ENCODE measurements at regions of chrX and their contacts with region 1.

Region 1: DNA sequence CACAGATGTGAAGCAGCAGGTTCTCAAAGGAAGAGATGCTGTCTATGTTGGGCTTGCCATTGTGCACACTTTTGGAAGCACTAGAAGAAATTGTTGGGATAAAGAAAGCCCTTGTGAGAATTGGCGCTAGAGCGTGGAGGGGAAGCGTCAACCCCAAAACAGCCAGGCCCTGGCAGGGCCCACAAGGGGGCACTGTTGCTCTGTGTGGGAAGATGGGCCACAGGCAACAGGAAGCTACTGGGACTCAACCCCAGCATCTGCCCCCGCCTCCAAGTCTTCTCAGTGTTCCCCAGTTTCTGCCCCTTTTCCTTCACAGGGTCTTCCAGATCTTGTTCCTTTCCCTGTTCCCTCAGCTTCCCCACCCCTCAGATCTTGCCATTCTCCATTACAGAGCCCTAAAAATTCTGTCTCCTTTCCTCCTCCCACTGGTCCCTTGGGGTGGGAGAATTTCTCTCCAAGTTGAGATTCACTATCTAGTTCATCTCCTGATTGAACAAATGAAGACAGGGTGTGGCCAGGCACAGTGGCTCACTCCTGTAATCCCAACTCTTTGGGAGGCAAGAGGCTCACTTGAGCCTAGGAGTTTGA is 85.5 kb downstream of the STARD8 start:
- DNase-seq: no peak
- ATAC-seq: peak; percentile 96
- H3K4me3 ChIP-seq: no peak overlapping the region
- H3K27ac ChIP-seq: no peak overlapping the region
- H3K4me1 ChIP-seq: no peaks in the 10 kb centered on the region
- H3K27me3 ChIP-seq: no peaks in the 10 kb centered on the region
- CTCF ChIP-seq: peak; percentile 75 to 84 (median 81)
- EP300 ChIP-seq: no peak
- POLR2A ChIP-seq: no peak
- RAD21 ChIP-seq: peak; percentile 75

Region 2: GRCh38 chrX:68571610-68572311 is 161.2 kb before region 1 on chrX:
- CTCF ChIA-PET with region 1: no interaction called
- POLR2A ChIA-PET with region 1: no interaction called
- RAD21 ChIA-PET with region 1: no interaction called
- SMC1A ChIA-PET with region 1: no interaction called
- in situ Hi-C with region 1: no loop called
- intact Hi-C with region 1: no loop called
- DNase-seq: peak; percentile 39
- ATAC-seq: peak; percentile 89
- H3K4me3 ChIP-seq: no peak overlapping the region
- H3K27ac ChIP-seq: no peak overlapping the region; the same call in 1 of the 2 replicates
- H3K4me1 ChIP-seq: no peaks in the 10 kb centered on the region
- H3K27me3 ChIP-seq: no peaks in the 10 kb centered on the region
- CTCF ChIP-seq: no peak
- EP300 ChIP-seq: no peak
- POLR2A ChIP-seq: no peak
- RAD21 ChIP-seq: no peak

Region 3: GRCh38 chrX:68743754-68744153 is 10.8 kb after region 1 on chrX:
- CTCF ChIA-PET with region 1: interaction called, 15 read pairs
- POLR2A ChIA-PET with region 1: no interaction called
- RAD21 ChIA-PET with region 1: no interaction called
- SMC1A ChIA-PET with region 1: no interaction called
- in situ Hi-C with region 1: no loop called
- intact Hi-C with region 1: no loop called
- DNase-seq: no peak
- ATAC-seq: no peak
- H3K4me3 ChIP-seq: no peak overlapping the region
- H3K27ac ChIP-seq: no peak overlapping the region
- H3K4me1 ChIP-seq: no peaks in the 10 kb centered on the region
- H3K27me3 ChIP-seq: no peaks in the 10 kb centered on the region
- CTCF ChIP-seq: no peak
- EP300 ChIP-seq: no peak
- POLR2A ChIP-seq: no peak
- RAD21 ChIP-seq: no peak

Region 4: DNA sequence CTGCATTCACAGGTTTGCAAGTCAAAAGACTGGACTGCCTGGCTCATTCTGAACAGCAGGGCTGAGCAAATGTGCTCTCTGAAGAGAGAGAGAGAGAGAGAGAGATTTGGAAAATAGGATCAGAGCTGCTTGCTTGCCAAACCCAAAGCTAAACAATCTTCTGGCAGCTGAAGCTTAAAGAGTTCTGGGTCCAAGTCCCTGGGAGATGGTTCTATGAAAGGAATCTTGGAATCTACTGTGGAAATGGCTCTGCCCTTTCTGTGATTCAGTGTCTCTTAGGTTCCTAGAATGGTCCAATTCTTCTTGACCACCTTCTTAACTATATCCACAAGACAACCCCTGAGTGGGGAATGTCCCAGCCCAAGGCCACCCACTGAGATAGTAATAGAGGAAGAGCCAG is 29.8 kb after region 1 on chrX:
- CTCF ChIA-PET with region 1: no interaction called
- POLR2A ChIA-PET with region 1: no interaction called
- RAD21 ChIA-PET with region 1: no interaction called
- SMC1A ChIA-PET with region 1: no interaction called
- in situ Hi-C with region 1: no loop called
- intact Hi-C with region 1: no loop called
- DNase-seq: no peak
- ATAC-seq: no peak
- H3K4me3 ChIP-seq: no peak overlapping the region
- H3K27ac ChIP-seq: no peak overlapping the region
- H3K4me1 ChIP-seq: no peaks in the 10 kb centered on the region
- H3K27me3 ChIP-seq: no peaks in the 10 kb centered on the region; a peak in 1 of 4 replicates
- CTCF ChIP-seq: no peak
- EP300 ChIP-seq: no peak
- POLR2A ChIP-seq: no peak
- RAD21 ChIP-seq: no peak

Region 5: DNA sequence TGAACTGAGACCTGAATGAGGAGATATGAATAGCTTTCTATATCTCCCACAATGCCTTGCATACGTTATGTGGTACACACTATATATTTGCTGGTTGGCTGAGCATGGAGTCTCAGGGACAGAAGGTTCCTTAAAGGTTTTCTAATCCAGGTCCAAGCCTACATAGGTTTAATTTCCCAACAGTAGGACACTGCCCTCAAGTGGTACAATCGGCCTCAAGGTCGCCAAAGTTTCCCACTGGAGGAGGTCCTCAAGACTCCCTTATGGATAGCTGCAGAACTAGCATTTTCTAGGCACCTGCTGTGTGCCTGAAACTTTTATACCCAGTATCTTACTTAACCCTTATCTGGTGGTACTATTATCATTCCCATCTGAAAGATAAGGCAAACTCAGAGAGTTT is 74.8 kb after region 1 on chrX:
- CTCF ChIA-PET with region 1: interaction called, 40 read pairs
- POLR2A ChIA-PET with region 1: no interaction called
- RAD21 ChIA-PET with region 1: interaction called, 8 read pairs
- SMC1A ChIA-PET with region 1: interaction called, 30 read pairs
- in situ Hi-C with region 1: no loop called
- intact Hi-C with region 1: loop called (anchors 1 kb)
- DNase-seq: no peak
- ATAC-seq: 0 out of 3 replicates have a peak, but pooled peaks have one; percentile 28
- H3K4me3 ChIP-seq: no peak overlapping the region
- H3K27ac ChIP-seq: no peak overlapping the region
- H3K4me1 ChIP-seq: no peaks in the 10 kb centered on the region
- H3K27me3 ChIP-seq: no peaks in the 10 kb centered on the region; a peak in 1 of 4 replicates
- CTCF ChIP-seq: peak; percentile 1 to 32 (median 28); a peak in 3 of 6 replicates
- EP300 ChIP-seq: no peak
- POLR2A ChIP-seq: no peak
- RAD21 ChIP-seq: 0 out of 2 replicates have a peak, but pooled peaks have one; percentile 28

Region 6: GRCh38 chrX:69222103-69223090 is 489.4 kb after region 1 on chrX:
- CTCF ChIA-PET with region 1: no interaction called
- POLR2A ChIA-PET with region 1: no interaction called
- RAD21 ChIA-PET with region 1: no interaction called
- SMC1A ChIA-PET with region 1: no interaction called
- in situ Hi-C with region 1: no loop called
- intact Hi-C with region 1: loop called (anchors 2 kb)
- DNase-seq: no peak
- ATAC-seq: peak; percentile 95
- H3K4me3 ChIP-seq: no peak overlapping the region
- H3K27ac ChIP-seq: no peak overlapping the region
- H3K4me1 ChIP-seq: no peaks in the 10 kb centered on the region
- H3K27me3 ChIP-seq: no peaks in the 10 kb centered on the region; a peak in 2 of 4 replicates
- CTCF ChIP-seq: peak; percentile 64 to 73 (median 71)
- EP300 ChIP-seq: no peak
- POLR2A ChIP-seq: no peak
- RAD21 ChIP-seq: peak; percentile 83

Region 7: DNA sequence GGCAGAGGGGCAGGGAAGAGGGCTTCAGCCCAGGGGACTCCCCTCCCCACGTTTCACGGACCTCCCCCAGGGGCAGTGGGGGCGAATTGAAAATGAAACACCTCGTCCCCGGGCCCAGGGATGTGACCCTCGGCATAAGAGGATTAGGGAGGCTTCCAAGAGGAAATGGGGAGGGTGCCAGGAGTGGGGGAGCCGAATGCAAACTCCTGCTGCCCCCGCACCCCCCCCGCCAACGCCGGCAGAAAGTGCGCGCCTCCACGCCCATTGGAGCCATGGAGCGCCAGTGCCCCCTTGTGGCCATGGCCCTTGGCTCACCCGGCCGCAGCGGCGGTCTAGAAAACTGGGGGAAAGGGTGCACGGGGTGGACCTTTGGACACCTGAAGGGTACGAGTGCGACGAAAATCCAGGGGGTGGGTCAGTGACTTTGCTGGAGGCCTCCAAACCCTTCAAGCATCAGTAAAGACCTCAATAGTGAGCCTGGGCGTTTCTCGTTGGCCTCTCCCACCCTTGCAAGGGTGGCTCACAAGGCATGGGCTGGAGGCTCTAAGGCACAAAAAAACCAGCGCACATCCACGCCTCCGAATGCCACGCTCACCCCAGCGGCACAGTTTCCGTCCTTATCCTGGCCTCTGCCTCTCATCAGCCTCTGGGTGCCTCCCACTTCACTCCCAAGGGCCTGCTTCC is 553.0 kb after region 1 on chrX:
- CTCF ChIA-PET with region 1: interaction called, 6 read pairs
- POLR2A ChIA-PET with region 1: no interaction called
- RAD21 ChIA-PET with region 1: no interaction called
- SMC1A ChIA-PET with region 1: no interaction called
- in situ Hi-C with region 1: loop called (anchors 10 kb)
- intact Hi-C with region 1: loop called (anchors 1 kb)
- DNase-seq: no peak
- ATAC-seq: peak; percentile 95
- H3K4me3 ChIP-seq: no peak overlapping the region
- H3K27ac ChIP-seq: no peak overlapping the region
- H3K4me1 ChIP-seq: no peaks in the 10 kb centered on the region
- H3K27me3 ChIP-seq: no peaks in the 10 kb centered on the region
- CTCF ChIP-seq: peak; percentile 82 to 98 (median 84)
- EP300 ChIP-seq: no peak
- POLR2A ChIP-seq: no peak
- RAD21 ChIP-seq: peak; percentile 84

Region 8: GRCh38 chrX:69387567-69388487 is 654.8 kb after region 1 on chrX:
- CTCF ChIA-PET with region 1: interaction called, 7 read pairs
- POLR2A ChIA-PET with region 1: no interaction called
- RAD21 ChIA-PET with region 1: interaction called, 4 read pairs
- SMC1A ChIA-PET with region 1: interaction called, 3 read pairs
- in situ Hi-C with region 1: no loop called
- intact Hi-C with region 1: loop called (anchors 5 kb)
- DNase-seq: no peak
- ATAC-seq: peak; percentile 93
- H3K4me3 ChIP-seq: no peak overlapping the region
- H3K27ac ChIP-seq: no peak overlapping the region
- H3K4me1 ChIP-seq: no peaks in the 10 kb centered on the region
- H3K27me3 ChIP-seq: no peaks in the 10 kb centered on the region
- CTCF ChIP-seq: peak; percentile 72 to 79 (median 74)
- EP300 ChIP-seq: no peak
- POLR2A ChIP-seq: no peak
- RAD21 ChIP-seq: peak; percentile 72